Heart left ventricle (tissue), 16 donors: ENCODE measurements at regions of chr13 and their contacts with region 1.

Region 1: GRCh38 chr13:78045916-78046315 is 127.3 kb upstream of the EDNRB start:
- DNase-seq: peak in 1 of 5 donors; percentile 25
- ATAC-seq: peak in 3 of 4 donors; percentile 42 to 95 (median 51)
- H3K4me3 ChIP-seq: no peak overlapping the region
- H3K27ac ChIP-seq: peak overlapping the region in 5 of 12 donors; percentile 33 to 58 (median 51)
- H3K4me1 ChIP-seq: peaks cover 0 to 8% (median 1%) of the 10 kb centered on the region in 12 donors
- H3K27me3 ChIP-seq: no peaks in the 10 kb centered on the region
- CTCF ChIP-seq: no peak
- POLR2A ChIP-seq: no peak

Region 2: DNA sequence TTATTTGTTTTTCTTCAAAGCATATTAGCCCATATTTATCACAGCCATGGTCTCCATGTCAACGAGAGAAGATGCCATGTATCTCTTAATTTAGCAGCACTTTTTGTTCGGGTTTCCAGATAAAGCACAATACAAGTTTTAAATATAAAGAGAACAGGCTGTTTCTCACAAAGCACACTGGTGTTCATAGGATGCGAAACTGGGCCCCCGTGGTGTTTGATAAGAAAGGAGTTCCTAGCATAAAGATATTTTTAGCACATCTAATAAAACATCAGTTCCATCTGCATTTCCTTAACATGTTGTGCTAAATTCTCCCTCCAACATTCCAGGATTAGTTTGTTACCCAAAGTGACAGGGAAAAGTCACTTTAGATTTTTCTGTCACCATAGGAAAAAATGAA is 54.9 kb before region 1 on chr13:
- intact Hi-C with region 1: loop called in 2 of 10 experiments (anchors 5 kb)
- DNase-seq: peak in 3 of 5 donors; percentile 30 to 34 (median 34)
- ATAC-seq: peak; percentile 36 to 67 (median 48)
- H3K4me3 ChIP-seq: no peak overlapping the region
- H3K27ac ChIP-seq: peak overlapping the region in 4 of 12 donors; percentile 4 to 54 (median 38)
- H3K4me1 ChIP-seq: peaks cover 0 to 35% (median 10%) of the 10 kb centered on the region in 12 donors
- H3K27me3 ChIP-seq: no peaks in the 10 kb centered on the region
- CTCF ChIP-seq: no peak
- POLR2A ChIP-seq: no peak

Region 3: DNA sequence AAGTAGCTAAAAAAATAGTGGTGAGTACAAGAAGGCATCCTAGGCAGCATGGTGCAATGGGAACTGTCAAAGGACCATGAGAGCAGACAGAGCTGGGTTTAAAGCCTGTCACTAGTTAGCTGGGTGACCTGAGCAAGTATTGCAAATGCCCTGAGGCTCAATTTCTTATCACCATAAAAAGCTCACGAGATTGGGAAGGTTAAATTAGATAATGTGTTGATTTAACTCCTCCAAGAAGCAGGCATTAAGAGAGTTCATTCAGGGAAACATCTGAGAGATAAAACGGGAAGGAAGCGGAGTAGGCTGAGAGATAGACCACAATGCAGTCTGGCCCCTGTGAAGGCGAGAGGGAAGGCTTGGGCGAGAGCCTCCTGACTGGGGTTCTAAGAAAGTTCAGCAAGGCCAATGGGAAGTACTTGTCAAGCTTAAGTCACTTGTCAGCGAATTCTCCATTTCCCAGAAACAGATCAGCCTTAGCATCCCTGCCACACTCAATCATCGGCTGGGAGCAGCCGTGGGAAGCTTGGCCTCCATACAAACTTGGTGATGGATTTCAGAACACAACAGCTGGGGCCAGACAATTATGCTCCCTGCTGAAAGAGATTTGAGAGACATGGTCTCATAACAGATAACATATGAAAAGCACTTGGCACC is 451.9 kb after region 1 on chr13:
- intact Hi-C with region 1: no loop called
- DNase-seq: no peak
- ATAC-seq: peak in 2 of 4 donors; percentile 51 to 65
- H3K4me3 ChIP-seq: no peak overlapping the region
- H3K27ac ChIP-seq: no peak overlapping the region
- H3K4me1 ChIP-seq: no peaks in the 10 kb centered on the region
- H3K27me3 ChIP-seq: no peaks in the 10 kb centered on the region
- CTCF ChIP-seq: no peak
- POLR2A ChIP-seq: no peak